ENCODE measurements at regions of chr5 and their contacts with region 1.

Region 1: GRCh38 chr5:68252673-68253623 is 37.4 kb downstream of the PIK3R1 start:
- DNase-seq: peak; percentile 66
- H3K4me3 Mint-ChIP-seq: peak overlapping the region; percentile 61
- H3K27ac Mint-ChIP-seq: peak overlapping the region; percentile 47
- H3K4me1 Mint-ChIP-seq: peaks cover 84% of the 10 kb centered on the region
- H3K27me3 Mint-ChIP-seq: no peaks in the 10 kb centered on the region
- CTCF ChIP-seq: peak; percentile 73

Region 2: GRCh38 chr5:67156976-67157583 is 1095.9 kb before region 1 on chr5:
- CTCF ChIA-PET with region 1: interaction called, 4 read pairs
- POLR2A ChIA-PET with region 1: no interaction called
- intact Hi-C with region 1: loop called (anchors 2 kb)
- DNase-seq: peak; percentile 52
- H3K4me3 Mint-ChIP-seq: no peak overlapping the region
- H3K27ac Mint-ChIP-seq: no peak overlapping the region
- H3K4me1 Mint-ChIP-seq: peaks cover 18% of the 10 kb centered on the region
- H3K27me3 Mint-ChIP-seq: no peaks in the 10 kb centered on the region
- CTCF ChIP-seq: peak; percentile 81

Region 3: GRCh38 chr5:67493676-67494075 is 759.3 kb before region 1 on chr5:
- CTCF ChIA-PET with region 1: no interaction called
- POLR2A ChIA-PET with region 1: interaction called, 4 read pairs
- intact Hi-C with region 1: loop called (anchors 1 kb)
- DNase-seq: peak; percentile 28
- H3K4me3 Mint-ChIP-seq: no peak overlapping the region
- H3K27ac Mint-ChIP-seq: no peak overlapping the region
- H3K4me1 Mint-ChIP-seq: peaks cover 29% of the 10 kb centered on the region
- H3K27me3 Mint-ChIP-seq: no peaks in the 10 kb centered on the region
- CTCF ChIP-seq: no peak

Region 4: GRCh38 chr5:68225188-68225910 is 27.6 kb before region 1 on chr5:
- CTCF ChIA-PET with region 1: interaction called, 6 read pairs
- POLR2A ChIA-PET with region 1: interaction called, 54 read pairs
- intact Hi-C with region 1: no loop called
- DNase-seq: peak; percentile 98
- H3K4me3 Mint-ChIP-seq: peak overlapping the region; percentile 69
- H3K27ac Mint-ChIP-seq: peak overlapping the region; percentile 92
- H3K4me1 Mint-ChIP-seq: peaks cover 85% of the 10 kb centered on the region
- H3K27me3 Mint-ChIP-seq: no peaks in the 10 kb centered on the region
- CTCF ChIP-seq: no peak

Region 5: DNA sequence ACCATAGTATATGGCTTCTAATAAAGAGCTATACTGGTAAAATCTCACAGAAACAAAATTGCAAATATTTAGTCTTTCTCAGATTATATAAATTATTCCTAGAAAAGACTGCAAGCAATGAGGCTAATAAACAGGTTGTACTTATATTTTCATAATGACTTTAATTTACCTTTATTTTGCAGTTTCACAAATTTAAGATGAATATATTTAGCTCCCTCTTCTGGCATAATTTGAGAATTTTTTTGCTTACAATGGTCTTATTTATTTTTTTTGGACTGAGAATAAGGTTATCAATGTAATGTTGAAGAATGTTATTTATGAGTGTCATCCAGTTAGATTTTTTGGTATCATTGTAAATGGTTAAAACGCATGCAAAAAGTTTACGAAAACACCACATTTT is 19.3 kb after region 1 on chr5:
- CTCF ChIA-PET with region 1: interaction called, 10 read pairs
- POLR2A ChIA-PET with region 1: interaction called, 11 read pairs
- intact Hi-C with region 1: no loop called
- DNase-seq: no peak
- H3K4me3 Mint-ChIP-seq: no peak overlapping the region
- H3K27ac Mint-ChIP-seq: no peak overlapping the region
- H3K4me1 Mint-ChIP-seq: peaks cover 73% of the 10 kb centered on the region
- H3K27me3 Mint-ChIP-seq: no peaks in the 10 kb centered on the region
- CTCF ChIP-seq: peak; percentile 35